ENCODE measurements at regions of chr19 and their contacts with region 1.

Region 1: GRCh38 chr19:39765091-39766076 is 13.3 kb upstream of the LEUTX start:
- DNase-seq: peak in 1 of 2 donors; percentile 27
- ATAC-seq: no peak
- H3K4me3 ChIP-seq: no peak overlapping the region
- H3K27ac ChIP-seq: no peak overlapping the region
- H3K4me1 ChIP-seq: no peaks in the 10 kb centered on the region
- H3K27me3 ChIP-seq: no peaks in the 10 kb centered on the region
- CTCF ChIP-seq: peak; percentile 65

Region 2: DNA sequence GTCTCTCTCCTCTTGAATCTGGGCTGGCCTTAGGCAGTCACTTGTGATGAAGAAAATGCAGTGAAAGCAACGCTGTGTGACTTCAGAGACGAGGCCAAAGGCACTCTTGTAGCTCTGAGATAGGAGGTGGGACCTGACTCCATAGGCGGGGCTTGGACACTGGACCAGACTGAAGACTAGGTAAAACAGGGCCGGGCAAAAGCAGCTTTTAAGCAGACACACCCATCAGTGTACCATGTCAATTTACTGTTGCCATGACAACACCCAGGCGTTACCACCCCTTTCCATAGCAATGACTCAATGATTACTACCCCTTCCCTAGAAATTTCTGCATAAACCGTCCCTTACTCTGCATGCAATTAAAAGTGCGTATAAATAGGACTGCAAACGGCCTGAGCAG is 218.8 kb before region 1 on chr19:
- intact Hi-C with region 1: loop called (anchors 2 to 5 kb)
- DNase-seq: no peak
- ATAC-seq: no peak
- H3K4me3 ChIP-seq: no peak overlapping the region
- H3K27ac ChIP-seq: no peak overlapping the region
- H3K4me1 ChIP-seq: no peaks in the 10 kb centered on the region
- H3K27me3 ChIP-seq: no peaks in the 10 kb centered on the region
- CTCF ChIP-seq: no peak

Region 3: GRCh38 chr19:39671738-39672363 is 93.5 kb before region 1 on chr19:
- intact Hi-C with region 1: loop called in 1 of 2 experiments (anchors 5 kb)
- DNase-seq: no peak
- ATAC-seq: peak; percentile 58 to 84 (median 68)
- H3K4me3 ChIP-seq: no peak overlapping the region
- H3K27ac ChIP-seq: no peak overlapping the region
- H3K4me1 ChIP-seq: peaks cover 4% of the 10 kb centered on the region
- H3K27me3 ChIP-seq: no peaks in the 10 kb centered on the region
- CTCF ChIP-seq: peak; percentile 71

Region 4: GRCh38 chr19:39679056-39679790 is 86.2 kb before region 1 on chr19:
- intact Hi-C with region 1: loop called (anchors 5 kb)
- DNase-seq: peak; percentile 25 to 60
- ATAC-seq: peak; percentile 86 to 93 (median 87)
- H3K4me3 ChIP-seq: peak overlapping the region; percentile 69
- H3K27ac ChIP-seq: peak overlapping the region; percentile 92
- H3K4me1 ChIP-seq: peaks cover 24% of the 10 kb centered on the region
- H3K27me3 ChIP-seq: no peaks in the 10 kb centered on the region
- CTCF ChIP-seq: no peak

Region 5: GRCh38 chr19:39846176-39846677 is 80.8 kb after region 1 on chr19 and contains the start of gene FBL:
- intact Hi-C with region 1: no loop called
- DNase-seq: peak; percentile 97 to 99
- ATAC-seq: peak; percentile 95 to 97 (median 97)
- H3K4me3 ChIP-seq: peak within 1 kb of the TSS; percentile 98
- H3K27ac ChIP-seq: peak within 1 kb of the TSS; percentile 85
- H3K4me1 ChIP-seq: peaks cover 32% of the 10 kb centered on the region
- H3K27me3 ChIP-seq: no peaks in the 10 kb centered on the region
- CTCF ChIP-seq: no peak
- total RNA-seq, gene FBL: 70.3 to 150 (median 114) TPM

Measured in psoas muscle (tissue), 8 donors.